CD4-positive, alpha-beta memory T cell (primary cell): ENCODE measurements at regions of chr10 and their contacts with region 1.

Region 1: DNA sequence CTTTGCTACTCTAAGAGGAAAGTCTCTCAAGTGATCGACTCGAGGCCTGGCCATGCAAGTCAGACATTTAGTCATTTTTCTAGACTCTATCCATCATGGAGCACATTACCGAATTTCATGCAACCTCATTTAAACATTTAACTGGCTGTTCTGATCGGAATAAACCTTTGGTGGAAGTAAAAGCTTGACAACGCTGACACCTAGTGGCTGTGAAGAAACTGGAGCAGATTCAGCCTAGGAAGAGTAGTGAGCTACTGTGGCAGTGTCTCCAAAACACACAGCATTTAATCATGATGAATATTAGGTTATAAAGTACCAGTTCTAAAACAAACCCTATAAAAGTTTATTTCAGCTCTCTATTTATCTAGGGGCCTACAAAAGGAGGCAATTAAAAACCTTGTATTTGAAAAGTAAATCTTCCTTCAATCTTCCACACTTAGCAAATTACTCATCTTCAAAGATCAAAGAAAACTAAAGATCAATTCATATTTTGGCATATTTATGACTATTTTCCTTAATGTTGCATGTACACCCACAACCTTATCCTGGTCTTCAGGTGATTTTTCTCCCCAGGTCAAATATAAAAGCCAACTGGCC is 175.0 kb downstream of the CTNNA3 start:
- DNase-seq: peak; percentile 40 to 47 (median 44)
- H3K4me3 ChIP-seq: no peak overlapping the region
- H3K4me3 Mint-ChIP-seq: no peak overlapping the region
- H3K27ac ChIP-seq: no peak overlapping the region
- H3K27ac Mint-ChIP-seq: no peak overlapping the region
- H3K4me1 ChIP-seq: no peaks in the 10 kb centered on the region
- H3K4me1 Mint-ChIP-seq: peaks cover 0 to 5% (median under 1%) of the 10 kb centered on the region in 4 donors
- H3K27me3 ChIP-seq: no peaks in the 10 kb centered on the region
- H3K27me3 Mint-ChIP-seq: peaks cover 3 to 7% of the 10 kb centered on the region in 2 donors

Region 2: GRCh38 chr10:66180581-66181318 is 1340.3 kb before region 1 on chr10:
- CTCF ChIA-PET with region 1: no interaction called
- POLR2A ChIA-PET with region 1: no interaction called
- intact Hi-C with region 1: loop called (anchors 5 kb)
- DNase-seq: peak in 4 of 5 donors; percentile 35 to 45 (median 43)
- H3K4me3 ChIP-seq: no peak overlapping the region
- H3K4me3 Mint-ChIP-seq: no peak overlapping the region
- H3K27ac ChIP-seq: no peak overlapping the region
- H3K27ac Mint-ChIP-seq: no peak overlapping the region
- H3K4me1 ChIP-seq: no peaks in the 10 kb centered on the region
- H3K4me1 Mint-ChIP-seq: peaks cover 0 to 3% (median under 1%) of the 10 kb centered on the region in 4 donors
- H3K27me3 ChIP-seq: no peaks in the 10 kb centered on the region
- H3K27me3 Mint-ChIP-seq: no peaks in the 10 kb centered on the region

Region 3: GRCh38 chr10:67171970-67172369 is 349.1 kb before region 1 on chr10:
- CTCF ChIA-PET with region 1: no interaction called
- POLR2A ChIA-PET with region 1: no interaction called
- intact Hi-C with region 1: no loop called
- DNase-seq: no peak
- H3K4me3 ChIP-seq: no peak overlapping the region
- H3K4me3 Mint-ChIP-seq: no peak overlapping the region
- H3K27ac ChIP-seq: no peak overlapping the region
- H3K27ac Mint-ChIP-seq: no peak overlapping the region
- H3K4me1 ChIP-seq: no peaks in the 10 kb centered on the region
- H3K4me1 Mint-ChIP-seq: no peaks in the 10 kb centered on the region
- H3K27me3 ChIP-seq: no peaks in the 10 kb centered on the region
- H3K27me3 Mint-ChIP-seq: no peaks in the 10 kb centered on the region

Region 4: GRCh38 chr10:67506082-67506756 is 14.8 kb before region 1 on chr10:
- CTCF ChIA-PET with region 1: interaction called, 15 read pairs
- POLR2A ChIA-PET with region 1: no interaction called
- intact Hi-C with region 1: no loop called
- DNase-seq: no peak
- H3K4me3 ChIP-seq: no peak overlapping the region
- H3K4me3 Mint-ChIP-seq: no peak overlapping the region
- H3K27ac ChIP-seq: no peak overlapping the region
- H3K27ac Mint-ChIP-seq: no peak overlapping the region
- H3K4me1 ChIP-seq: no peaks in the 10 kb centered on the region
- H3K4me1 Mint-ChIP-seq: no peaks in the 10 kb centered on the region
- H3K27me3 ChIP-seq: no peaks in the 10 kb centered on the region
- H3K27me3 Mint-ChIP-seq: no peaks in the 10 kb centered on the region

Region 5: DNA sequence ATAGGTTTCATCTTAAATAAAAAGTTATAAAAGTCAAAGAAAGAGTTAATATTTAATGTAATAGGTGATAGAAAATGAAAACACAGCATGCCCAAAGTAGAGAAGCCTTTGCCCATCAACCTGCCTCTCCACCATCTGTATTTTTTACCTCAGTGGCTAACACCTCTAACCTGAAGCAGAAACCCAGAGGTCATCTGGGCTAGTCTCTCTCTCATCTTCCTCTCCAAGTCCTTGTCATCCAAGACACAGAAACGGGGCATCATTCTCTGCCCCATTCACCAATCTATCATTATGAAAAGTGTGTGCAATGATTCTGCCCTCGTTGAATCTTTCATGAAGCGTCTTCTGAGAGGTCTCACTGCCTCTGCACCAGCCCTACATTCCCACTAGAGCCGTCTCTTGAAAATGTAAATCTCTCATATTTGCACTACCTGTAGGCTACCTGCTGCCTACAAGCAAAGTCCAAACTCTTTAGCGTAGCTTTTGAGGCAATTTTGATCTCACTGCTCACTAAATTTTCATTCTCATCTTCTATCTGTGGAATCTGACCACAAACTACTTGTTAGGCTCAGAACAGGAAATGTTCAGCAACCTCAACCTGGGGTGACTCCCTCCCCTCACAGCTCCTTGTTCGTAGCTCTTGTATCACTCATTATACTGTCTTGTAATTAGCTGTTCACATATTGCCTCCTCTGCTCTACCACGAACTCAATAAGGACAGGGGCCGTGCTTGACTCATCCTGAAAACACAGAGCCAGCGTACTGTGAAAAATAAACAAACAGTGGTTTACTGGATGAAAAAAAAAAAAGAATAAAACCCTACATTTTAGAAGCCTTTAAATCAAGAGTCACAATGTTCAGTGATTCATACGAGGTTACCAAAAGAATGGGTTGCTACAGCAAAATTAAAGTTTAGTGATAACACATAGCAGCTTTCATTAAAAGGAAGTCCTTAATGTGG is 91.8 kb after region 1 on chr10:
- CTCF ChIA-PET with region 1: interaction called, 4 read pairs
- POLR2A ChIA-PET with region 1: no interaction called
- intact Hi-C with region 1: loop called (anchors 5 kb)
- DNase-seq: peak; percentile 77 to 89 (median 81)
- H3K4me3 ChIP-seq: peak overlapping the region in 1 of 2 donors; percentile 39
- H3K4me3 Mint-ChIP-seq: peak overlapping the region; percentile 39 to 87 (median 76)
- H3K27ac ChIP-seq: peak overlapping the region; percentile 13
- H3K27ac Mint-ChIP-seq: peak overlapping the region; percentile 69 to 89 (median 78)
- H3K4me1 ChIP-seq: peaks cover 25% of the 10 kb centered on the region
- H3K4me1 Mint-ChIP-seq: peaks cover 18 to 33% (median 24%) of the 10 kb centered on the region in 4 donors
- H3K27me3 ChIP-seq: no peaks in the 10 kb centered on the region
- H3K27me3 Mint-ChIP-seq: peaks cover 0 to 2% of the 10 kb centered on the region in 2 donors

Region 6: DNA sequence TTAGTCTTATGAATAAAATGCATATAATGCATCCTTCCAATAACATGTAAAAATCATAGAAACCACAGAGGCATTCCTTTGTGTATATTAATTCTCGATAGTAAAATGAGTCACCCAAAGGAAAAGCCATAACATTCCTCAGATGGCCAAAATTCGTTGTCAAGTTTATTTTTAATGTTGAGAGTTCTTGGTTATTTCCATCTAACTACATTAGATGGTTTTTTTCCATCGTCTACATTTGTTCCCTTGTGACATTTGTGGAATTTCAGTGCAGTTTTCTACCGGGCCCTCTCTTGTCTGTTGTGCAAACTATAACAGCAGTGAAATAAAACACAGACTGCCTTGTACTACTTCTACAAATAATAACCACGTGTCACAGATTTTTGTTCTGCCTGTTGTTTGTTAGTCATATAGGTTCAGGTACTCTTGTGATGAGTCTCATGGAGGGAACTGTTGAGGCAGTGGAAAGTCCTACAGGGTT is 1145.3 kb after region 1 on chr10:
- CTCF ChIA-PET with region 1: no interaction called
- POLR2A ChIA-PET with region 1: no interaction called
- intact Hi-C with region 1: no loop called
- DNase-seq: no peak
- H3K4me3 ChIP-seq: no peak overlapping the region
- H3K4me3 Mint-ChIP-seq: no peak overlapping the region
- H3K27ac ChIP-seq: no peak overlapping the region
- H3K27ac Mint-ChIP-seq: no peak overlapping the region
- H3K4me1 ChIP-seq: no peaks in the 10 kb centered on the region
- H3K4me1 Mint-ChIP-seq: peaks cover 0 to 2% (median under 1%) of the 10 kb centered on the region in 4 donors
- H3K27me3 ChIP-seq: no peaks in the 10 kb centered on the region
- H3K27me3 Mint-ChIP-seq: no peaks in the 10 kb centered on the region